ENCODE measurements at regions of chr2 and their contacts with region 1.

Region 1: DNA sequence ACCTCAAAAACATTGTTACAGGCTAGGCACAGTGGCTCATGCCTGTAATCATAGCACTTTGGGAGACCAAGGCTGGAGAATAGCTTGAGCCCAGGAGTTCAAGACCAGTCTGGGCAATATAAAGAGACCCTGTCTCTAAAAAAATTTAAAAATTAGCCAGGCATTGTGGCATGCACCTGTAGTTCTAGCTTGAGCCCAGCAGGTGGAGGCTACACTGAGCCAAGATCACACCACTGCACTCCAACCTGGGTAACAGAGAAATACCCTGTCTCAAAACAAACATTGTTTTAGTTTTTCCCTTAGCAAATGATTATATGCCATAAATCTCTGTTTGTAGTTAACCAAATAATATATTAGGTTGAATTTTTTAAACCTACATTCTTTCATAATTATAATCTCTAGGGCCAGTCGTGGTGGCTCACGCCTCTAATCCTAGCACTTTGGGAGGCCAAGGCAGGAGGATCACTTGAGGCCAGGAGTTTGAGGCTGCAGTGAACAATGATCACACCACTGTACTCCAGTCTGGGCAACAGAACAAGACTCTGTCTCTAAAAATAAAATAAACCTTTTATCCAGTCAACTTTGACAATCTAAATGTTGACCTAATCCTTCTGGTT is 13.3 kb upstream of the CYP20A1 start:
- DNase-seq: peak in 6 of 9 donors; percentile 2 to 41 (median 36)
- ATAC-seq: peak; percentile 85
- H3K4me3 ChIP-seq: no peak overlapping the region
- H3K4me3 Mint-ChIP-seq: no peak overlapping the region
- H3K27ac ChIP-seq: no peak overlapping the region
- H3K27ac Mint-ChIP-seq: no peak overlapping the region
- H3K4me1 ChIP-seq: no peaks in the 10 kb centered on the region
- H3K4me1 Mint-ChIP-seq: no peaks in the 10 kb centered on the region
- H3K27me3 ChIP-seq: no peaks in the 10 kb centered on the region
- H3K27me3 Mint-ChIP-seq: no peaks in the 10 kb centered on the region

Region 2: GRCh38 chr2:203376173-203376572 is 150.6 kb after region 1 on chr2:
- CTCF ChIA-PET with region 1: no interaction called
- POLR2A ChIA-PET with region 1: no interaction called
- intact Hi-C with region 1: loop called in 1 of 2 experiments (anchors 1 kb)
- DNase-seq: peak in 4 of 9 donors; percentile 1 to 23 (median 10)
- ATAC-seq: no peak
- H3K4me3 ChIP-seq: no peak overlapping the region
- H3K4me3 Mint-ChIP-seq: no peak overlapping the region
- H3K27ac ChIP-seq: no peak overlapping the region
- H3K27ac Mint-ChIP-seq: no peak overlapping the region
- H3K4me1 ChIP-seq: no peaks in the 10 kb centered on the region
- H3K4me1 Mint-ChIP-seq: peaks cover 0 to 16% (median 7%) of the 10 kb centered on the region in 7 donors
- H3K27me3 ChIP-seq: no peaks in the 10 kb centered on the region
- H3K27me3 Mint-ChIP-seq: no peaks in the 10 kb centered on the region

Region 3: DNA sequence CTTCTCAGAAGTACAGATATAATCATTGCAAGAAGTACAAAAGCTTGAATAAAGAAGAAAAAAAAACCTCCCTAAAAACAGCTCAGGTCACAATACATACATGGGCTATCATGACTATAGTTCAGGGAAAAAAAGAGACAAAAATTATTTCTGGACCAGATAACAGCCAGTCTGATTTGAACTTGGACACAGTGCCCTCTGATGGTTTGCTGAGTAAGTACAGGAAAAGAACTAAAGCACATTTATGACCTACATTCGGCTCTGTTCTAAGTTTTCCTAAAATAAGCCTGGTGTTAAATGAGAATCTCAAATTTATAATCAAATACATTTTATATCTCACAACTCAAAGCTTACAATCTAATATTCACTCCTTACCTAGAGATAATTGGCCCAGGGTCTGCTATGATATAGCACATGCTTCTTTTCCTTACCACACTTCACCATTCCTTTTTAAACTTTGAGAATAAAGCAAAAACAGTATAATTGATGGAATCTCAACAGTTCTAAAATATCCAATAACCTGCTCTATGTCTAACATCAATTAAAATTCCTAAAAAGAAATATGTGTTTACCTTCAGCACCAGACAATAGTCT is 228.4 kb after region 1 on chr2:
- CTCF ChIA-PET with region 1: interaction called, 12 read pairs
- POLR2A ChIA-PET with region 1: interaction called, 3 read pairs
- intact Hi-C with region 1: loop called (anchors 1 kb)
- DNase-seq: peak in 7 of 9 donors; percentile 10 to 52 (median 34)
- ATAC-seq: peak; percentile 73
- H3K4me3 ChIP-seq: no peak overlapping the region
- H3K4me3 Mint-ChIP-seq: no peak overlapping the region
- H3K27ac ChIP-seq: no peak overlapping the region
- H3K27ac Mint-ChIP-seq: no peak overlapping the region
- H3K4me1 ChIP-seq: no peaks in the 10 kb centered on the region
- H3K4me1 Mint-ChIP-seq: peaks cover 0 to 1% (median 0%) of the 10 kb centered on the region in 7 donors
- H3K27me3 ChIP-seq: no peaks in the 10 kb centered on the region
- H3K27me3 Mint-ChIP-seq: no peaks in the 10 kb centered on the region

Region 4: DNA sequence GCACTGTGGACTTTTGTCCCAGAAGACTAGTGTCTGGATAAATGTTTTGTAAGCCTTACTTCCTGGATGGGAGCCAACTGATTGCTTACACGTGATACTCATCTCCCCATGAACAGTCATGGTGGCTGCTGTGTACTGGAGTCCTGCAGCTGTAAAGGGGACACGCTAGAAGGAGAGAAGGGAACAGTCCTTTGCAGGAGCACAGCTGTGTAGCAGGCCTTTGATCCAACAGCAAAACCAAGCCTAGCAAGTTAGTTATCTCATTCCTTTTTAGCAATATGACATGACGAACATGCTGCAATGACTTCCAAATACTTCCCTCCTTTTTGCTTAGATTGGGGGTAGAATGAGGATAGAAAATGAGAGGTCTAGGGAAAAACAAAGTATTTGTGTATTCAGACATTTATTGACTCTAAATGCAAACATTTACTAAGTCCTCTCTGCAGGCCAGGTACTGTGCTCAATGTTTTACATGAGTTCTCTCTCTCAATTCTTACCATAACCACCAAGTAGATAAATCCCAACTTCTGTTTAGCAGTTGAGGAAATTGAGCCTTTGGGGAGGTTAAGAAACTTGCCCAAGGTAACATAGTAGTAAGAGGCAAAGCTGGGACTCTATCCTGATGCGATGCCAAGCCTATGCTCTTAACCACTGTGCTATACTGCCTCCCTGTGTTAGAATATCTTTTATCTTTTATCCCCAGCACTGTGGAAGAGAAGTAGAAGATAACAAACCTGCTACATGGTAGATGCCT is 425.5 kb after region 1 on chr2:
- CTCF ChIA-PET with region 1: no interaction called
- POLR2A ChIA-PET with region 1: no interaction called
- intact Hi-C with region 1: loop called in 1 of 2 experiments (anchors 2 kb)
- DNase-seq: peak in 4 of 9 donors; percentile 8 to 24 (median 12)
- ATAC-seq: peak; percentile 64
- H3K4me3 ChIP-seq: no peak overlapping the region
- H3K4me3 Mint-ChIP-seq: no peak overlapping the region
- H3K27ac ChIP-seq: no peak overlapping the region
- H3K27ac Mint-ChIP-seq: peak overlapping the region in 4 of 9 donors; percentile 5 to 48 (median 34)
- H3K4me1 ChIP-seq: no peaks in the 10 kb centered on the region
- H3K4me1 Mint-ChIP-seq: peaks cover 20 to 40% (median 29%) of the 10 kb centered on the region in 7 donors
- H3K27me3 ChIP-seq: no peaks in the 10 kb centered on the region
- H3K27me3 Mint-ChIP-seq: no peaks in the 10 kb centered on the region

Measured in naive thymus-derived CD4-positive, alpha-beta T cell (primary cell).